Pancreas (tissue), 10 donors: ENCODE measurements at regions of chr19 and their contacts with region 1.

Region 1: DNA sequence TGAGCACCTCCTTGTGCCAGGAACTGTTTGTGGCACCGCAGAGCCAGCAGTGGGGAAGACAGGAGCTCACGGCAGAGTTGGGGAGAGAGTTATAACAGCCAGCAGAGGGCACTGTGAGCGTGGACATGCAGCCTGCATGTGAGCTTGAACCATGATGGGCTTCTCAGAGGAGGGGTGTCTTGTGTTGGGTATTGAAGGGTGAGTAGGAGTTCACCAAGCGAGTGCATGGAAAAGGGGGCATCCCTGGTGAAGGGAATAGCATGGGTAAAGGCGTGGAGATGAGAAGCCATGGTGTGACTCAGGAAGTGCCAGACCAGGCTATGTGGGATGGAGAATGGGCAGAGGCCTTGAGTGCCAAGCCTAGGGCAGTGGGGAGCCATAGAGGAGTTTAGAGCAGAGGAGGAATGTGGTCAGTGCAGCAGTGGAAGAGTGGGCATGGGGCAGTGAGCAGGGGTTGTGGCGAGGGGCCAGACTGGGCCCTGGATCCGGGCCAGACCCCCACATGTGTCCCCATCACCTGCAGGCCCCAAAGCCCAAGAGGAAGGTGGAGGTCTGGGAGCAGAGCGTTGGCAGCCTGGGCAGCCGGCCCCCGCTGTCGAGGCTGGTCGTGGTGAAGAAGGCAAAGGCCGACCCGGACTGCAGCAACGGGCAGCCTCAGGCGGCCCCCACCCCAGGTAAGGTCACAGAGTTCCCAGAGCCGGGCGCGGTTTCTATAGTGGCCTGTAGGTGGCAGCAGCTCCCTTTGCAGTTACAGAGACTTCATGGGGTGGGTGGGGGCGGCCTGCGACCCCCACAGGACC is 11.8 kb upstream of the SHD start:
- DNase-seq: peak in 5 of 6 donors; percentile 48 to 87 (median 74)
- ATAC-seq: peak; percentile 63 to 87 (median 76)
- H3K4me3 ChIP-seq: no peak overlapping the region
- H3K27ac ChIP-seq: peak overlapping the region in 1 of 4 donors; percentile 29
- H3K4me1 ChIP-seq: no peaks in the 10 kb centered on the region
- H3K27me3 ChIP-seq: no peaks in the 10 kb centered on the region
- CTCF ChIP-seq: peak; percentile 70 to 78 (median 72)

Region 2: DNA sequence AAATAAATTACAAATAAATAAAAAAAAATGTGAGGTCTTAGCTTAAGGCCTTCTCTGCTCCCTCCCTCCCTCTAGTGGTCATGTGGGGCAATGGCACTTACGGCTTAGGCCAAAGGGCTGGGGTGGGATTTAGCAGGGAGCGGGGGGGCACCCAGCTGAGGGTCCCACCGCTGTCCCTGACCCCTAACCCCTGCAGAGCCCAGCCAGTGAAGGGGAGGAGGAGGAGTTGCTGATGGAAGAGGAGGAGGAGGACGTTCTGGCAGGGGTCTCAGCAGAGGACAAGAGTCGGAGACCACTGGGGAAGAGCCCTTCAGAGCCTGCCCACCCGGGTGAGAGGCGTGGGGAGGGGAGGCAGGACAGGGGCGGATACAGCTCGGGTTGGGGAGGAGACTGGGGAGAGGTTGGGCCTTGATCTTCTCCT is 85.4 kb after region 1 on chr19:
- intact Hi-C with region 1: loop called in 2 of 3 experiments (anchors 5 to 10 kb)
- DNase-seq: peak in 4 of 6 donors; percentile 52 to 68 (median 64)
- ATAC-seq: peak; percentile 52 to 82 (median 77)
- H3K4me3 ChIP-seq: no peak overlapping the region
- H3K27ac ChIP-seq: no peak overlapping the region
- H3K4me1 ChIP-seq: no peaks in the 10 kb centered on the region
- H3K27me3 ChIP-seq: no peaks in the 10 kb centered on the region
- CTCF ChIP-seq: peak; percentile 69 to 90 (median 86)